ENCODE measurements at regions of chr1 and their contacts with region 1.

Region 1: DNA sequence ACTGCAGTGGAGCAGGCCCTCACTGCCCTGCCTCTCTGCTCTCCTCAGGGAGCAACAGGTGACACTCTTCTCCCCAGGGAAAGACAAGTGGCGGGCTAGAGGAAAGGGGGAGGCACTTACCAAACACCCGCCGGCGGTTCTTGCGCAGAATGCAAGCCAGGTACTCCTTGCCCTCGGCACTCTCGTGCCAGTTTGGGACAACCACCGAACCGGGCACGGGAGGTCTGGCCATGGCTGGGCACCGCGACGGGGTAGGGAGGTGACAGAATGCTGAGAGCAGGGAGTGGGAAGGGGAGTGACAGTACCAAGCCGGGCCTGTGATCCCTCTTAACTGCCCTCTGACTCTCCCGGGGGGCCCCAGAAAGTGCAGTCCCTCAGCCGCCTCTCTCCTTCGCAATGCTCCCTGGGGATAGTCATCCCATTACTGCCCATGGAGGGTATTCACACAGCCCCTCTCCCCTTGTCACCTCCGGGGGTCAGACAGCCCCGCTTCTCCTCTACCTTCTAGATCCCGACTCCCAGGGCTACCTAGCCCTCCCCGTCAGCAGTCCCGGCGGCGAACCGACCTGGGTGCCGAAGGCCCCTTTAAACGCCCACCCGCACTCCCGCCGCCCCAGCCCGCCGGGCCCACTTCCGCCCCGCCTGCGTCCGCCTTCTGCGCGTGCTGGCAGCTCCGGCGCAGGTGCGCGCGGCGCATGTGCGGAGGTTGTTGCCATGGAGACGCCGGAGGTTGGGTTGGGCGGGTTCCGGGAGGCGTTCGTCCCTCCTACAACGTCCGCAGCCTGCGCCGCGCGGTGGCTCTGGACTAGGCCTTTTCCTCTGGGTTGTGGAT is at the start of gene CPLANE2:
- DNase-seq: peak; percentile 97
- CTCF ChIP-seq: peak; percentile 10

Region 2: GRCh38 chr1:16226490-16227179 is 10.1 kb before region 1 on chr1:
- CTCF ChIA-PET with region 1: no interaction called
- POLR2A ChIA-PET with region 1: interaction called, 10 read pairs
- DNase-seq: no peak
- CTCF ChIP-seq: no peak